ENCODE measurements at regions of chr12 and their contacts with region 1.

Region 1: GRCh38 chr12:52004042-52004648 is 2.6 kb upstream of the TAMALIN start:
- DNase-seq: peak; percentile 66 to 78
- ATAC-seq: no peak
- H3K4me3 ChIP-seq: no peak overlapping the region
- H3K27ac ChIP-seq: no peak overlapping the region
- H3K4me1 ChIP-seq: no peaks in the 10 kb centered on the region
- H3K27me3 ChIP-seq: no peaks in the 10 kb centered on the region

Region 2: DNA sequence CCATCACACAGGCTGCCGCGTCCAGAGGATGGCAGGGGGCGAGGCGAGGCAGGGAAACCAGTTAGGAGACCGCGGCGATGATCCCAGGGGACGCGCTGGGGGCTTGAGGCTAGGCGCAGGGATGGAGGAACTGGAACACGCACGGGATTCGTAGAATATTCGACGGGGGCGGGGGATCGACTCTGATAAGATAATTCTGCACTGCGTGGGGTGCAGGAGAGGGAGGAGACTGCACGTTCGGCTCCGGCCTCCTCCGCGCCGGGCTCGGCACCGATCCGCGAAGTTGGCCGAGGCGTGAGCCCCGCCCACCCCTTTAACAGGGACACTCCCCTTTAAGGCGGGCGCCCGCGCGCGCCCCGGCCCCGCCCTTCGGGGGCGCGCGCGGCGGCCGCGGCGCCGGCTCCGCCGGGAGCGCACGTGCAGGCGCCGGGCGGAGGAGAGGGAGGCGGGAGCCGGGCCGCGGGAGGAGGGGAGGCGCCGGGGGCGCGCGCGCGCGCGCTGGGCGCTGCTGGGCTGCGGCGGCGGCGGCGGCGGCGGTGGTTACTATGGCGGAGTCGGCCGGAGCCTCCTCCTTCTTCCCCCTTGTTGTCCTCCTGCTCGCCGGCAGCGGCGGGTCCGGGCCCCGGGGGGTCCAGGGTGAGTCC is 52.8 kb before region 1 on chr12 and contains the start of gene ACVR1B:
- intact Hi-C with region 1: no loop called
- DNase-seq: peak; percentile 93 to 96
- ATAC-seq: peak; percentile 95
- H3K4me3 ChIP-seq: peak within 1 kb of the TSS; percentile 73 to 99
- H3K27ac ChIP-seq: peak within 1 kb of the TSS; percentile 7 to 16
- H3K4me1 ChIP-seq: peaks cover 0 to 2% of the 10 kb centered on the region in 2 donors
- H3K27me3 ChIP-seq: no peaks in the 10 kb centered on the region
- total RNA-seq, gene ACVR1B: 24.0 to 24.5 TPM

Region 3: GRCh38 chr12:52087961-52088820 is 84.0 kb after region 1 on chr12:
- intact Hi-C with region 1: loop called in 1 of 2 experiments (anchors 5 kb)
- DNase-seq: peak in 1 of 2 donors; percentile 69
- ATAC-seq: no peak
- H3K4me3 ChIP-seq: no peak overlapping the region
- H3K27ac ChIP-seq: no peak overlapping the region
- H3K4me1 ChIP-seq: no peaks in the 10 kb centered on the region
- H3K27me3 ChIP-seq: no peaks in the 10 kb centered on the region

Measured in aorta (tissue), 5 donors.